Prostate gland (tissue), 2 donors: ENCODE measurements at regions of chr16 and their contacts with region 1.

Region 1: GRCh38 chr16:86145669-86146068 is 246.7 kb downstream of the IRF8 start:
- DNase-seq: no peak
- H3K4me3 ChIP-seq: no peak overlapping the region
- H3K27ac ChIP-seq: no peak overlapping the region
- H3K4me1 ChIP-seq: no peaks in the 10 kb centered on the region
- H3K27me3 ChIP-seq: no peaks in the 10 kb centered on the region
- CTCF ChIP-seq: no peak
- POLR2A ChIP-seq: no peak

Region 2: GRCh38 chr16:86083382-86084002 is 62.2 kb before region 1 on chr16:
- intact Hi-C with region 1: loop called (anchors 2 kb)
- DNase-seq: no peak
- H3K4me3 ChIP-seq: no peak overlapping the region
- H3K27ac ChIP-seq: no peak overlapping the region
- H3K4me1 ChIP-seq: no peaks in the 10 kb centered on the region
- H3K27me3 ChIP-seq: peaks cover 5% of the 10 kb centered on the region
- CTCF ChIP-seq: no peak
- POLR2A ChIP-seq: no peak